Activated CD8-positive, alpha-beta memory T cell treated with anti-CD3 and anti-CD28 coated beads, Interleukin-2, amount 10 ng/mL, durations not matched to agents 7 days and 5 days (primary cell): ENCODE measurements at regions of chr7 and their contacts with region 1.

Region 1: DNA sequence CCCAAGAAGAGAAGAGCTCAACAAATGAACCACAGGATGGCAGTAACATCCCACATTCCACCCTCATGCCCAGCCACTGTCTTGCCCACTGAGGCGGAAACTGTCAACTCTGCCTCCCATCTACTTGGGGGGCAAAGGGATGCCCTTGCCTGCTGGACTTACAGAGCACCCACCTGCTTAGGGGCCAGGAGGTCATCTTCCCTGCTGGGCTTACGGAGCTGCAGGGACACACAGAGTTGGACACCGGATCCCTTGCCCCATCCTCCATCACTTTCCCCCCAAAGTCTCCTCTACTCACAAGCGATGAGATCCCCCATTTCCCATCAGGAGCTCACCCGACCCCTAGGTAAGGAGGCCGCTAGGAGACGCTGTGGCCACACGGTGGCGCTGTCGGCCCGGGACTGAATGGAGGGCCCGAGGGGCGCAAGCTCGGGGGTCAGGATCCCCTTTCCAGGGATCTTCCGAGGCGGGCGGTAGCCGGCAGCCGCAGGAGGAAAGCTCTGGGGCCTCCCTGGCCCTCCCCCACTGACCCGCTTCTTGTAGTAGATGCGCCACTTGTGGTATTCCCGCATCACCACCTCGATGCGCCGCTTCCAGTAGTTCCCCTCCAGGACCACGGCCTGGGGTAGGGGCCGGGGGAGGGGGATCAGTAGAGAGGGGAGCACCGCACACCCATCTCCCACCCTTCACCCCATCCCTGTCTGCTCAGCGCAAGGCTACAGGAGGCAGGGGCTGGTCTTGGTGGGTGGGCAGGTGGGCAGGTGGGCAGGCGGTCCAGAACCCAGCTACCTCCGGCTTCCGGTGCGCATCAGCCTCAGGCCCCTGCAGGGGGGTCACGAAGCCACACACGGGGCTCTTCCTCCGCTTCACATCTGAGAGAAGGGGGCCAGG is 17.3 kb downstream of the MLXIPL start:
- DNase-seq: peak; percentile 67
- ATAC-seq: peak; percentile 81
- H3K4me3 Mint-ChIP-seq: no peak overlapping the region
- H3K27ac Mint-ChIP-seq: no peak overlapping the region
- H3K4me1 Mint-ChIP-seq: no peaks in the 10 kb centered on the region
- H3K27me3 Mint-ChIP-seq: peaks cover 21% of the 10 kb centered on the region

Region 2: GRCh38 chr7:73364006-73364728 is 242.9 kb before region 1 on chr7:
- CTCF ChIA-PET with region 1: no interaction called
- DNase-seq: no peak
- ATAC-seq: no peak
- H3K4me3 Mint-ChIP-seq: no peak overlapping the region
- H3K27ac Mint-ChIP-seq: no peak overlapping the region
- H3K4me1 Mint-ChIP-seq: no peaks in the 10 kb centered on the region
- H3K27me3 Mint-ChIP-seq: peaks cover 9% of the 10 kb centered on the region

Region 3: GRCh38 chr7:73487486-73487885 is 119.6 kb before region 1 on chr7:
- CTCF ChIA-PET with region 1: no interaction called
- DNase-seq: no peak
- ATAC-seq: no peak
- H3K4me3 Mint-ChIP-seq: no peak overlapping the region
- H3K27ac Mint-ChIP-seq: peak overlapping the region; percentile 26
- H3K4me1 Mint-ChIP-seq: peaks cover 2% of the 10 kb centered on the region
- H3K27me3 Mint-ChIP-seq: no peaks in the 10 kb centered on the region

Region 4: DNA sequence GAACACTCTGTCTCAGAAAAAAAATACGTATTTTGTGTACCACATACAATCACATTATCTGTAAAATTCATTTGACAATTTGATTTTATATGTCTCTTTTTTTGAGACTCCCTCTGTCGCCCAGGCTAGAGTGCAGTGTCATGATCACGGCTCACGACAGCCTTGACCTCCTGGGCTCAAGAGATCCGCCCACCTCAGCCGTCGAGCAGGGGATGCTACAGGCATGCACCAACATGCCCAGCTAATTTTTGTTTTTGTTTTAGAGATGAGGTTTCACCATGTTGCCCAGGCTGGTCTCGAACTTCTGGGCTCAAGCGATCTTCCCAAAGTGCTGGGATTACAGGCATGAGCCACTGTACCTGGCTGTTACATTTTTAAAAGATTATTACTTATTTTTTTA is 73.3 kb before region 1 on chr7:
- CTCF ChIA-PET with region 1: no interaction called
- DNase-seq: no peak
- ATAC-seq: no peak
- H3K4me3 Mint-ChIP-seq: no peak overlapping the region
- H3K27ac Mint-ChIP-seq: no peak overlapping the region
- H3K4me1 Mint-ChIP-seq: no peaks in the 10 kb centered on the region
- H3K27me3 Mint-ChIP-seq: no peaks in the 10 kb centered on the region

Region 5: GRCh38 chr7:73578342-73579127 is 28.5 kb before region 1 on chr7 and contains the start of gene TBL2:
- CTCF ChIA-PET with region 1: interaction called, 10 read pairs
- DNase-seq: peak; percentile 99
- ATAC-seq: peak; percentile 93
- H3K4me3 Mint-ChIP-seq: peak within 1 kb of the TSS; percentile 82
- H3K27ac Mint-ChIP-seq: peak within 1 kb of the TSS; percentile 95
- H3K4me1 Mint-ChIP-seq: peaks cover 33% of the 10 kb centered on the region
- H3K27me3 Mint-ChIP-seq: no peaks in the 10 kb centered on the region
- total RNA-seq, gene TBL2: 23.3 to 27.2 TPM

Region 6: DNA sequence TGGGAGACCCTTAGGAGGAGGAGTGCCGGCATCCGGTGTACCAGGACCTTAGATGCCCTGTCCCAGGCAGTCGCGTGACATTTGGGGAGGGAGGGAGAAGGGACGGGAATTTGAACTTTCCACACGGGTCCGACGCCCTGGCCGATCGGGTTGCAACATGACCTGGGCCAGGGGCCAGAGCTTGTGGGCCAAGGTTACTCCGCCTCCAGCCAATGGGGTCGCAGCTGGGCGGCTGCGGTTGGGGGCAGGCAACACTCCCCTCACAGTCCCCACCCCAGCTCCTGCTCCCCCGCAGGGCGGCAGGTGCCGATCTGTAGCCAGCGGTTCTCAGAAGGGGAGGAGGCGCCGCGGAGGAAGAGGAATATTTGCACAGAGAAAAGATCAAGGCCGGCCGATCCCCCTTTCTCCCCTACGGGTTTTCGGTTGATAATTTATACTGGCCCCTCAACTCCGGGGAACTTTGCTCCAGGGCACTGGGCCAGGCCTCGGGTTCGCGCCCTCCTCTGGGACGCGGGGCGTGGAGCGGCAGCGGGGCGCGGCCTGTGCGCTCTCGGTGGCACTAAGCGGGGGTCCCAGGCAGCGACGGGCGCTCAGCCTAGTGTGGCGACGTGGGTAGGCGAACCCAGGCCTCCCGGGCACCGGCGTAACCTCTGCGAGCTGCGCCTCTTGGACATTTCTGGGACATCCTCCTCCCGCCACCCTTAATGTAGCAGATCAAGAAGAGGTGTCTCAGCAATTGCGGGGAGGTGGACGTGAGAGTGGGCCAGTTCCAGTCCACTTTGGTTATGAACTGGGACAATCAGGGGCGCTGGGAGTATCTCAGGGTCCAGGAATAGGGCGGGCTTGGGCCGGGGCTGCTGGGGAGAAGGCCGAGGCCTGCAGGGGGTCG is 16.1 kb after region 1 on chr7:
- CTCF ChIA-PET with region 1: interaction called, 17 read pairs
- DNase-seq: no peak
- ATAC-seq: no peak
- H3K4me3 Mint-ChIP-seq: no peak overlapping the region
- H3K27ac Mint-ChIP-seq: no peak overlapping the region
- H3K4me1 Mint-ChIP-seq: no peaks in the 10 kb centered on the region
- H3K27me3 Mint-ChIP-seq: peaks cover 49% of the 10 kb centered on the region

Region 7: DNA sequence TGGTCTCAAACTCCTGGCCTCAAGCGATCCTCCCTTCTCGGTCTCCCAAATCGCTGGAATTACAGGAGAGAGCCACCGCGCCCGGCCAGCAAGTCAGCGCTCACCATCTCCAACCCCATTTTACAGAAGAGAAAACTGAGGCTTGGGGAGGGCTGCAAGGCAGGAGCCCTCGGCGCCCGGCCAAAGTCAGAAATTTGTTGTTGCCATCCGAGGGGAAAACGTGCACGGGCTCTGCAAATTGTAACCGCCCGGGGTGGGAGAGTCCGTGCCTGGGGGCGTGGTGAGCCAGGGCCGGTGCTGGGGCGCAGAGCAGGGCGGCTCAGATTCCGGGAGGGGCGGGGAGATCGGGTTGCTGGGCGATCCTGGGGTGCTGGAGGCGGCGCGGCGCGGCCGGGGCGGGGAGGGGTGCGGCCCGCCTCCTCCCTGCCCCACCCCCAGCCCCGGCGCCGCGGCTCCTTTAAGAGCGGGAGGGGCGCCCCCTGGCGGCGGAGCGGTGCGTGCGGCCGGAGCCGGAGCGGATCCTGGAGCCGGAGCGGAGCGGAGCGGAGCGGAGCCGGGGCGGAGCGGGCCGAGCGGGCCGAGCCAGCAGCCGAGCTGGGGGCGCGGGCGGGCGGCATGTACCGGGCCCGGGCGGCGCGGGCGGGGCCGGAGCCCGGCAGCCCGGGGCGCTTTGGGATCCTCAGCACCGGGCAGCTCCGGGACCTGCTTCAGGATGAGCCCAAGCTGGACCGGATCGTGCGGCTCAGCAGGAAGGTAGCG is 60.5 kb after region 1 on chr7 and contains the start of gene VPS37D:
- CTCF ChIA-PET with region 1: interaction called, 16 read pairs
- DNase-seq: peak; percentile 94
- ATAC-seq: peak; percentile 98
- H3K4me3 Mint-ChIP-seq: peak within 1 kb of the TSS; percentile 60
- H3K27ac Mint-ChIP-seq: no peak within 1 kb of the TSS
- H3K4me1 Mint-ChIP-seq: peaks cover 7% of the 10 kb centered on the region
- H3K27me3 Mint-ChIP-seq: peaks cover 57% of the 10 kb centered on the region
- total RNA-seq, gene VPS37D: not detected

Region 8: GRCh38 chr7:73715648-73716317 is 108.7 kb after region 1 on chr7:
- CTCF ChIA-PET with region 1: interaction called, 14 read pairs
- DNase-seq: no peak
- ATAC-seq: no peak
- H3K4me3 Mint-ChIP-seq: no peak overlapping the region
- H3K27ac Mint-ChIP-seq: no peak overlapping the region
- H3K4me1 Mint-ChIP-seq: peaks cover 38% of the 10 kb centered on the region
- H3K27me3 Mint-ChIP-seq: peaks cover 14% of the 10 kb centered on the region

Region 9: GRCh38 chr7:73727952-73728351 is 120.9 kb after region 1 on chr7:
- CTCF ChIA-PET with region 1: interaction called, 147 read pairs
- DNase-seq: no peak
- ATAC-seq: no peak
- H3K4me3 Mint-ChIP-seq: no peak overlapping the region
- H3K27ac Mint-ChIP-seq: no peak overlapping the region
- H3K4me1 Mint-ChIP-seq: peaks cover 2% of the 10 kb centered on the region
- H3K27me3 Mint-ChIP-seq: peaks cover 16% of the 10 kb centered on the region

Region 10: GRCh38 chr7:74155792-74156395 is 548.8 kb after region 1 on chr7:
- CTCF ChIA-PET with region 1: no interaction called
- DNase-seq: no peak
- ATAC-seq: no peak
- H3K4me3 Mint-ChIP-seq: no peak overlapping the region
- H3K27ac Mint-ChIP-seq: no peak overlapping the region
- H3K4me1 Mint-ChIP-seq: no peaks in the 10 kb centered on the region
- H3K27me3 Mint-ChIP-seq: no peaks in the 10 kb centered on the region